Ovary (tissue), 10 donors: ENCODE measurements at regions of chr6 and their contacts with region 1.

Region 1: DNA sequence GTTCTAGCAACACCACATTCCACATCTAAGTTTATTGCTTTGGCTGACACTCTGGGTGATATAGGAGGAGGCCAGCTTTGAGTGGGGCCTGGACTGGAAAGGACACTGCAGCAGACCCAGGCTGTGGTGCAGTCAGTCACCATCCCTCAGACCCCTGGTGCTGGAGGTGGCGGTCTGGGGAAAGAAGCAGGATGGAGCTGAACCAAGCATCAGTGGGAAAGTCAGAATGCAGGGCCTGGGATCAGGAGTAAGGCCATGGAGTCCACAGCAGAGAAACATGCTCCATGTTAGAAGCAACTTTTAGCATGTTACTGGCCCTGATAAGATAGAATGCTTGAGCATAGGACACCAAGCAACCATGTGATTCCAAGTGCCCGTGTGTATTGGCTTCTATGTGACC is 5.9 kb downstream of the HLA-A start:
- DNase-seq: no peak
- H3K4me3 ChIP-seq: no peak overlapping the region
- H3K27ac ChIP-seq: no peak overlapping the region
- H3K4me1 ChIP-seq: peaks cover 5% of the 10 kb centered on the region
- H3K27me3 ChIP-seq: no peaks in the 10 kb centered on the region
- CTCF ChIP-seq: no peak
- EP300 ChIP-seq: no peak
- POLR2A ChIP-seq: no peak

Region 2: DNA sequence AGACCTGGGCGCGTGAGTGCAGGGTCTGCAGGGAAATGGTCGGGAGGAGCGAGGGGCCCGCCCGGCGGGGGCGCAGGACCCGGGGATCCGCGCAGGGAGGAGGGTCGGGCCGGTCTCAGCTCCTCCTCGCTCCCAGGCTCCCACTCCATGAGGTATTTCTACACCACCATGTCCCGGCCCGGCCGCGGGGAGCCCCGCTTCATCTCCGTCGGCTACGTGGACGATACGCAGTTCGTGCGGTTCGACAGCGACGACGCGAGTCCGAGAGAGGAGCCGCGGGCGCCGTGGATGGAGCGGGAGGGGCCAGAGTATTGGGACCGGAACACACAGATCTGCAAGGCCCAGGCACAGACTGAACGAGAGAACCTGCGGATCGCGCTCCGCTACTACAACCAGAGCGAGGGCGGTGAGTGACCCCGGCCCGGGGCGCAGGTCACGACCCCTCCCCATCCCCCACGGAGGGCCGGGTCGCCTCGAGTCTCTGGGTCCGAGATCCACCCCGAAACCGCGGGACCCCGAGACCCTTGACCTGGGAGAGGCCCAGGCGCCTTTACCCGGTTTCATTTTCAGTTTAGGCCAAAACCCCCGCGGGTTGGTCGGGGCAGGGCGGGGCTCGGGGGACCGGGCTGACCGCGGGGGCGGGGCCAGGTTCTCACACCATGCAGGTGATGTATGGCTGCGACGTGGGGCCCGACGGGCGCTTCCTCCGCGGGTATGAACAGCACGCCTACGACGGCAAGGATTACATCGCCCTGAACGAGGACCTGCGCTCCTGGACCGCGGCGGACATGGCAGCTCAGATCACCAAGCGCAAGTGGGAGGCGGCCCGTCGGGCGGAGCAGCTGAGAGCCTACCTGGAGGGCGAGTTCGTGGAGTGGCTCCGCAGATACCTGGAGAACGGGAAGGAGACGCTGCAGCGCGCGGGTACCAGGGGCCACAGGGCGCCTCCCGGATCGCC is 60.2 kb before region 1 on chr6:
- intact Hi-C with region 1: loop called in 2 of 4 experiments (anchors 2 to 10 kb)
- DNase-seq: peak; percentile 85 to 87 (median 86)
- H3K4me3 ChIP-seq: peak overlapping the region; percentile 83
- H3K27ac ChIP-seq: peak overlapping the region in 1 of 2 donors; percentile 99
- H3K4me1 ChIP-seq: peaks cover 2% of the 10 kb centered on the region
- H3K27me3 ChIP-seq: no peaks in the 10 kb centered on the region
- CTCF ChIP-seq: peak in 1 of 3 donors; percentile 15
- EP300 ChIP-seq: no peak
- POLR2A ChIP-seq: peak; percentile 26